ENCODE measurements at regions of chr22 and their contacts with region 1.

Region 1: GRCh38 chr22:49930739-49931412 is 12.4 kb downstream of the CRELD2 start:
- DNase-seq: no peak
- H3K4me3 ChIP-seq: no peak overlapping the region
- H3K27ac ChIP-seq: peak overlapping the region in 2 of 4 donors; percentile 44 to 47
- H3K4me1 ChIP-seq: peaks cover 0 to 37% (median 35%) of the 10 kb centered on the region in 4 donors
- H3K27me3 ChIP-seq: peaks cover 7 to 17% (median 13%) of the 10 kb centered on the region in 3 donors
- CTCF ChIP-seq: peak in 2 of 4 experiments; percentile 26 to 34
- EP300 ChIP-seq: no peak
- POLR2A ChIP-seq: no peak

Region 2: DNA sequence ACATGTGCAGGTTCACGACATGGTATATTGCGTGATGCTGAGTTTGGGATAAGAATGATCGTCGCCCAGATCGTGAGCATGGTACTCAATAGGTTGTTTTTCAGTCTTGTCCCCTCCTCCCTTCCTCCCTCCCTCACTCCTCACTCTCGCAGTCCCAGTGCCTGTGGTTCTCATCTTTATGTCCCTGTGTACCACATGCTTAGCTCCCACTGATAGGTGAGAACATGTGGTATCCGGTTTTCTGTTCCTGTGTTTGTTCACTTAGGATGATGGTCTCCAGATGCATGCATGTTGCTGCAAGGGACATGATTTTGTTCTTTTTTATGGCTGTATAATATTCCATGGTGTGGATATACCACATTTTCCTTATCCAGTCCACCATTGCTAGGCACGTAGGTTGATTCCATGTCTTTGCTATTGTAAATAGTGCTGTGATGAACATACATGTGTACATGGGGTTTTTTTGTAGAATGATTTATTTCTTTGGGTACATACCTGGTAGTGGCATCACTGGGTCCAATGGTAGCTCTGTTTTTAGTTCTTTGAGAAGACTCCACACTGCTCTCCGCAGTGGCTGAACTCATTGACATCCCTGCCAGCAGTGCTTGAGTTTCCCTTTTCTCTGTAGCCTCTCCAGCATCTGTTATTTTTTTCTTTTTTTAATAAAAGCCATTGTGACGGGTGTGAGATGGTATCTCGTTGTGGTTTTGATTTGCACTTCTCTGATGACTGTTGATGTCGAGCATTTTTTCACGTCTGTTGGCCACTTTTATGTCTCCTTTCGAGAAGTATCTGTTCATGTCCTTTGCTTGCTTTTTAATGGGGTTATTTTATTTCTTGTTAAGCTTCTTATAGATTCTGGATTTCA is 60.8 kb before region 1 on chr22:
- intact Hi-C with region 1: no loop called
- DNase-seq: no peak
- H3K4me3 ChIP-seq: no peak overlapping the region
- H3K27ac ChIP-seq: no peak overlapping the region
- H3K4me1 ChIP-seq: no peaks in the 10 kb centered on the region
- H3K27me3 ChIP-seq: no peaks in the 10 kb centered on the region
- CTCF ChIP-seq: no peak
- EP300 ChIP-seq: no peak
- POLR2A ChIP-seq: no peak

Region 3: DNA sequence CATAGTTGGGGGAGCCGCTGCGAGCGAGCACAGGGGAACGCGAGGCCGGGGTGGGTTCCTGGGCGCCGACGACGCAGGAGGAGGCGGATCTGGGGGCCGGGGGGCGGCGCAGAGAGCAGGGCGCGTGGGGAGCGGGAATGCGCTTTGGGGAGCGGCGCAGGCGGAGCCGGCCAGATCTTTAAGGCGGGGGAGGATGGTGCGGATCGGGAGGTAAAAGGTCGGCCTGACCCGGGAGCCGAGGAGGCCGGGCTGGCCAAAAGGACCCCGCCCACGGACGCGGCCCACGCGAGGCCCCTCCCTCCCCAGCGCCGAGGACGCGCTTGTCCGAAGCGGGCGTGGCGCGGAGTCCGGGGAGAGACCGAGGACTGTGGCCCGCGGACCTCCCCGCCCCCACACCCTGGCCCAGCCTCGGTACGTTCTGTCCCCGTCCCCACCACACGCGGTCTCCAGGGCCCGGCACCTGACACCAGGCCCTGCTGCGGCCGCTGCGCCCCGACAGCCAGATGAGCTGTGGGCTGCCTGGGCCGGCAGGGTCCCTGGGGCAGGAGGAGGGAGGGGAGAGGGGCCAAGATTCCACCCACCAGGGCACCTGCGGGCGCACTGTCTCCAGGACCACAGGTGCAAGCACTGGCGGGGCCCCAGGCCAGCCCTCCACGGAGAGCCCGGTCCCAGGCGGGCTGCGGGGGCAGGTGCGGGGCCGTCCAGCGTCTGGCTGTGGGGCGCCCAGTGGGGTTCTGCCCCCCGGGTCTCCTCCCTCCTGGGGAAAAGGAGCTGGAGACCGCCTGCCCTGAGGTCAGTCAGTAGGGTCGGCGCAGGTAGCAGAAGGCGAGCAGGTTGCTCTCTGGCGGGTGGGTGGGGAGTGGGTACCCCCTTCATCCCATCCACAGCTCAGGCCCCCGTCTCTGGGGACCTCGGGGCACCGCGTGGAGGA is 40.6 kb after region 1 on chr22:
- intact Hi-C with region 1: loop called (anchors 2 kb)
- DNase-seq: peak; percentile 88
- H3K4me3 ChIP-seq: peak overlapping the region; percentile 41 to 62 (median 54)
- H3K27ac ChIP-seq: peak overlapping the region; percentile 76 to 95 (median 86)
- H3K4me1 ChIP-seq: peaks cover 2 to 42% (median 38%) of the 10 kb centered on the region in 4 donors
- H3K27me3 ChIP-seq: no peaks in the 10 kb centered on the region
- CTCF ChIP-seq: no peak
- EP300 ChIP-seq: peak in 2 of 4 donors; percentile 45 to 66
- POLR2A ChIP-seq: no peak

Region 4: DNA sequence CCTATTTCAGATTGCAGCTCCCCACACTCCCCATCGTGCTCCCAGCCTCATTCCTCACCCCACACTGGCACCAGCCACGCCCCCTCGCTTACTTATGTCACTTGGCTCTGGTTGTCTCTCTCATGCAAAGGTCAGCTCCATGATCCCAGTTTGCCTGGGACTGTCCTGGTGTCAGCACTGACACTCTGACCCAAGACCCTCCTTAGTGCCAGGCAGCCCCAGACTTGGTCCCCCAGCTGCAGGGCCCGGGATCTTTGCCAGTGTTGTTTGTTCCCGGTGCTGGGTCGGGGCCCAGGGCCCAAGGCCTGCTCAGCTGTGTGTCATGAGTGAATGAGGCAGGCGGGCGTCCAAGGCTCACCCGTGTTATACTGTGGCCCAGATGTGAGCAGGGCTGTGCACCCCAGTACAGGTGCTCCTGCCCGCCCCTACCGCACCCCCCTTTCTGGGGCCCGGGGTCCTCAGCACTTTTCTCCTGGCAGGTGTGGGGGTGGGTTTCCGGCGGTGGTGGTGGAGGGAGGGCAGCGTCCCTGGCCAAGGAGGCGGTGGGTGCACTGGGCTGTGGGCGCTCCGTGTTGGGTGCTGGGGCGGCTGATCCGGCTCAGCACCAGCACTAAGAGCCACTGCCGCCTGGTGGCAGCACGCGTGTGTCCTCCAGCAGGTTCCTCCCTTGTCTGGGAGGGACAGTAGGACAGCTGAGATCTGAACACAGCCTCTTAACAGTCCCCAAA is 62.2 kb after region 1 on chr22:
- intact Hi-C with region 1: loop called (anchors 2 kb)
- DNase-seq: peak; percentile 66
- H3K4me3 ChIP-seq: no peak overlapping the region
- H3K27ac ChIP-seq: no peak overlapping the region
- H3K4me1 ChIP-seq: peaks cover 0 to 4% (median 0%) of the 10 kb centered on the region in 4 donors
- H3K27me3 ChIP-seq: peaks cover 0 to 9% (median 0%) of the 10 kb centered on the region in 3 donors
- CTCF ChIP-seq: peak; percentile 10 to 68 (median 54)
- EP300 ChIP-seq: no peak
- POLR2A ChIP-seq: no peak

Region 5: GRCh38 chr22:50030297-50031188 is 99.7 kb after region 1 on chr22:
- intact Hi-C with region 1: loop called (anchors 1 kb)
- DNase-seq: peak; percentile 84
- H3K4me3 ChIP-seq: no peak overlapping the region
- H3K27ac ChIP-seq: no peak overlapping the region
- H3K4me1 ChIP-seq: peaks cover 0 to 9% (median 6%) of the 10 kb centered on the region in 4 donors
- H3K27me3 ChIP-seq: peaks cover 0 to 55% (median 21%) of the 10 kb centered on the region in 3 donors
- CTCF ChIP-seq: peak; percentile 69 to 84 (median 74)
- EP300 ChIP-seq: no peak
- POLR2A ChIP-seq: no peak

Region 6: DNA sequence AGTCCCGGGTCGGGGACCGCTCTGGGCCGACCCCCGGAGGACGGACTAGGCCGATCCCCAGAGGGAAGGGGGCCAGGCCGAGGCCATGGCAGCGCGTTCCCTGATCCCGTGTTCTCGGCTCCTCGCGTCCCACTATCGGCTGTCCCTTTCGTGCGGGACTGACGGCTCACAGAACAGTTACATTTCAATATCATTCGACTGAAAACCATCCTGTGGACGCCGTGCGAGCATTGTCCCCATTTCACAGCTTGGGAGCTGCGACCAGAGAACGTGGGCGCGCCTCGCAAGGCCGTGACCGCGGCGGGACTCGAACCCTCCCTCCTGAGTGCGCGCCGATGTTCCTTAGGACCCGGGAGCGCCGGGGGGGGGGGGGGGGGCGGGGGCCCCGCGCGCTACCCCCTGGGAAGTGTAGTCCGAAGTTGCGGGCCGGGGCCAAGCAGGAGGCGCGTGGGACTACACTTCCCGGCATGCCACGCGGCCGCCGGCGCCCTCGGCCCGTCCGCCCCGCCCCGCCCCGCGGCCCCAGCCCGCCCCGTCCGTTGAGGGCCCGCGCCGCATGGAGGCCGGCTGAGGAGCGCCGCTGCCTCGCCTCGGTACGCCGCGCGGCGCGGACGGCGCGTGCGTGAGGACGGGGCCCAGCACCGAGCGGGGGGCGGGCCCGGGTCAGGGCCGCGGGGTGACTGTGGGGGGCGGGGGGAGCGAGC is 254.7 kb after region 1 on chr22 and contains the start of gene TRABD:
- intact Hi-C with region 1: loop called (anchors 10 kb)
- DNase-seq: peak; percentile 95
- H3K4me3 ChIP-seq: peak within 1 kb of the TSS; percentile 61 to 90 (median 81)
- H3K27ac ChIP-seq: peak within 1 kb of the TSS; percentile 64 to 77 (median 76)
- H3K4me1 ChIP-seq: peaks cover 0 to 55% (median 50%) of the 10 kb centered on the region in 4 donors
- H3K27me3 ChIP-seq: peaks cover 0 to 2% (median 0%) of the 10 kb centered on the region in 3 donors
- CTCF ChIP-seq: no peak
- EP300 ChIP-seq: no peak
- POLR2A ChIP-seq: no peak
- total RNA-seq, gene TRABD: 14.2 to 21.4 (median 18.2) TPM

Region 7: DNA sequence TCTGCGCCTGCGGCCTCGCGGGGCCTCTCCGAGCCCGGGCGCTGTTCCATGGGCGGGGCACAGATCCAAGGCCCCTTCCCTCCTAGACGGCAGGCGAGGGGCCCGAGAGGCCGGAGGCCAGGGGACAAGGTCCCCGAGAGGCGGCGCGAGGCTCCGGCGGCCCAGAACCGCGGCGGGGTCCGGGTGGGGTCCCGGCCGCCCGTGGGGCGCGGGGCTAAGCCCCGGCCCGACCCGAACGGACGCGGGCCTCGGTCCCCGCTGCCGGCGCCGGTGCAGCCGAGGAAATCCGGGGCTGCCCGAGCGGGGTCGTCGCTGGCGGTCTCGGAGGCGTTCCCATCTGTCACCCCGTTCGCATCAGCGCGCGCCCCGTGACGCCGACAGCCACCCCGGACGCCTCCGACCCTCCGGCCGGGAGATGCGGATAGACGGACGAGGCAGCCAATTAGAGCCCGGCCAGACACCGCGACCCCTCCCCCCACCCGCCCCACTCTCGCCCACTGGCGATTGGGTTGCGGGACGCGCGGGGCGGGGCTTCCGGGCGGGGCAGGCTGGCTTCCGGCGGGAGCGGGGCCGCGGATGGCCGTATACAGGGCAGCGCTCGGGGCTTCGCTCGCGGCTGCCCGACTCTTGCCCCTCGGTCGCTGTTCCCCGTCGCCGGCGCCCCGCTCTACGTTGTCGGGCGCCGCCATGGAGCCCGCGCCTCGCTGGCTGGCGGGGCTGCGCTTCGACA is 269.8 kb after region 1 on chr22 and contains the start of gene SELENOO:
- intact Hi-C with region 1: loop called (anchors 5 kb)
- DNase-seq: peak; percentile 95
- H3K4me3 ChIP-seq: peak within 1 kb of the TSS; percentile 42 to 89 (median 84)
- H3K27ac ChIP-seq: peak within 1 kb of the TSS; percentile 79 to 89 (median 86)
- H3K4me1 ChIP-seq: peaks cover 0 to 32% (median 24%) of the 10 kb centered on the region in 4 donors
- H3K27me3 ChIP-seq: no peaks in the 10 kb centered on the region
- CTCF ChIP-seq: no peak
- EP300 ChIP-seq: no peak
- POLR2A ChIP-seq: peak; percentile 24 to 52
- total RNA-seq, gene SELENOO: 17.5 to 30.2 (median 22.3) TPM

Measured in sigmoid colon (tissue), 7 donors.